K562 (cell line): ENCODE measurements at regions of chr14 and their contacts with region 1.

Region 1: GRCh38 chr14:81220830-81221578 is at the start of gene GTF2A1:
- DNase-seq: peak; percentile 84 to 94 (median 87)
- ATAC-seq: peak; percentile 87
- H3K4me3 ChIP-seq: peak within 1 kb of the TSS; percentile 67
- H3K27ac ChIP-seq: peak within 1 kb of the TSS; percentile 100
- H3K4me1 ChIP-seq: peaks cover 3 to 17% of the 10 kb centered on the region in 2 experiments
- H3K27me3 ChIP-seq: no peaks in the 10 kb centered on the region
- CTCF ChIP-seq: no peak
- EP300 ChIP-seq: no peak
- POLR2A ChIP-seq: peak; percentile 52
- RAD21 ChIP-seq: no peak
- polyA plus RNA-seq, gene GTF2A1: 3.4 to 5.2 TPM

Region 2: DNA sequence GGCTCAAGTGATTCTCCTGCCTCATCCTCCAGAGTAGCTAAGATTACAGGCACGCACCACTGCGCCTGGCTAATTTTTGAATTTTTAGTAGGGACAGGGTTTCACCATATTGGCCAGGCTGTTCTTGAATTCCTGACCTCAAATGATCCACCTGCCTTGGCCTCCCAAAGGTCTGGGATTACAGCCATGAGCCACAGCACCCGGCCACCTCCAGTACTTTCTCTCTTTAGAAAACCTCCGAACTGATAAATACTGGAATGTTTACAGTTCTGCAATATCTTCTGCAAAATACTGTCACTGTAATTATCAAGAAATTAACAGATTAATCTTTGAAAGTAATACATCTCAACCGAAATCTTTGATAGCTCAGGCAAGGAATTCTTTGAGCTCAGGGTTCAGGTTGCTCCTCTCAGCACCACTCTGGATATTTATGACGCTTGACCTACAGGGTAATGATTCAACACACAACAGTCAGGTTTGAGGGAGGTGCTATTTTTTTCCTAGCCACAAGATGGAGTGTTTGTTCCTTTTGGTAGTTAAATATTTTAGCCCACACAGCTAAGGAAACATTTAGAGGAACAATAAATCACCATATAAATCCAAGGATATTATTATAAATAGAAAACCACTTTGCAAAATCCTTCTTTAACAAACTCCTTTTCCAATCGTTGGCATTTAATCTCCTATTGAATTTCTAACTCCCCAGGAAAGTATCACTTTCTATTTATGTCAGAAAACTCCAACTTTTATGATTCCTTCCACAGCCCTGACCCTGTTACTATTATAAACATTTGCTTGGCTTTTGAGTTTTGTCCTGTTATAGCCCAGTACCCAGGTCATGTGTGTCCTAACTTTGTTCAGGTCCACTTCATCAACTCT is 48.3 kb after region 1 on chr14:
- CTCF ChIA-PET with region 1: no interaction called
- POLR2A ChIA-PET with region 1: interaction called, 4 read pairs
- in situ Hi-C with region 1: no loop called
- intact Hi-C with region 1: loop called (anchors 5 kb)
- DNase-seq: peak; percentile 61 to 62 (median 61)
- ATAC-seq: peak; percentile 89
- H3K4me3 ChIP-seq: no peak overlapping the region
- H3K27ac ChIP-seq: no peak overlapping the region
- H3K4me1 ChIP-seq: peaks cover 4 to 16% of the 10 kb centered on the region in 2 experiments; a peak in 3 of 5 replicates
- H3K27me3 ChIP-seq: no peaks in the 10 kb centered on the region
- CTCF ChIP-seq: peak; percentile 49 to 79 (median 60); a peak in 4 of 6 replicates
- EP300 ChIP-seq: no peak
- POLR2A ChIP-seq: no peak
- RAD21 ChIP-seq: peak; percentile 67 to 77

Region 3: DNA sequence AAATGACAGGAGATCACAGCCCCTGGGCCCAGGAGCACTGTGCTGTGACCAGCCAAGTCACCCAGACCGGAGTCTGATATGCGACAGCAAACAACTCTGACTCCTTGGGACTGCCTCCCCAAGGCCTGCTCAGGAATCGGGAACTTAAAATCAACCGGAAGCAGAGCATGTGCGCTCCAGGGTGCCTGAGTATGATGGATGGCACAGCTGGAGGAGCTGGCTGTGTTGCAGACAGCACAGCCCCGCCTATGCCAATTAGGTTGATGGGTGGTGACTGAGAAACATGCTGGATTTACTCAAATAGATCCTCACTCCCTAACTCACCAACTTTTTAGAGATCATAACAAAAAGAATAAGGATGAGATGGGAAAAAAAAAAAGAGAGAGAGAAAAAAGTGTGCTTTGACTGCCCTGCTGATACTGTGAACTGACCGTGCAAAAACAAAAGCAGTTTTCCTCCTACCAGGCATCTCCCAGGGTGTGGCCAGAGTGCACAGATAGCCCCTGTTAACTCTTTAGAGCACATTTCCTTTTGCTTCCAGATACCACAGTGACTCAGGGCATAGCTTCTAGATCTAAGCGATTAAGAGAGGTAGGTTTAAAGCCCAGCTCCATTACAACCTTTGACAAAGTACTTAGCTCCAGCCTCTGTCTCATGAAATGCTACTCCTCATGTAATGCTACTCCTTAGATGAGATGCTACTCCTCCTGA is 206.5 kb after region 1 on chr14:
- CTCF ChIA-PET with region 1: no interaction called
- POLR2A ChIA-PET with region 1: interaction called, 3 read pairs
- in situ Hi-C with region 1: no loop called
- intact Hi-C with region 1: loop called (anchors 5 kb)
- DNase-seq: peak; percentile 61 to 91 (median 69)
- ATAC-seq: peak; percentile 84
- H3K4me3 ChIP-seq: peak overlapping the region; percentile 37
- H3K27ac ChIP-seq: peak overlapping the region; percentile 90
- H3K4me1 ChIP-seq: peaks cover 24 to 73% of the 10 kb centered on the region in 2 experiments
- H3K27me3 ChIP-seq: no peaks in the 10 kb centered on the region
- CTCF ChIP-seq: no peak
- EP300 ChIP-seq: peak; percentile 90
- POLR2A ChIP-seq: peak; percentile 57
- RAD21 ChIP-seq: peak in 1 of 2 experiments; percentile 14; a peak in 1 of 4 replicates

Region 4: GRCh38 chr14:81533536-81534343 is 312.7 kb after region 1 on chr14 and contains the start of gene SEL1L:
- CTCF ChIA-PET with region 1: no interaction called
- POLR2A ChIA-PET with region 1: interaction called, 7 read pairs
- in situ Hi-C with region 1: no loop called
- intact Hi-C with region 1: loop called (anchors 5 kb)
- DNase-seq: peak; percentile 94 to 98 (median 96)
- ATAC-seq: peak; percentile 98
- H3K4me3 ChIP-seq: peak within 1 kb of the TSS; percentile 96
- H3K27ac ChIP-seq: peak within 1 kb of the TSS; percentile 65
- H3K4me1 ChIP-seq: peaks cover 0 to 17% of the 10 kb centered on the region in 2 experiments; a peak in 3 of 5 replicates
- H3K27me3 ChIP-seq: no peaks in the 10 kb centered on the region
- CTCF ChIP-seq: no peak
- EP300 ChIP-seq: no peak
- POLR2A ChIP-seq: peak; percentile 77
- RAD21 ChIP-seq: no peak
- polyA plus RNA-seq, gene SEL1L: 7.7 to 10.1 TPM